A673 (cell line): ENCODE measurements at regions of chr2 and their contacts with region 1.

Region 1: GRCh38 chr2:32553829-32554432 is 73.9 kb upstream of the TTC27 start:
- DNase-seq: peak; percentile 64
- H3K4me3 ChIP-seq: no peak overlapping the region
- H3K27ac ChIP-seq: no peak overlapping the region
- H3K4me1 ChIP-seq: no peaks in the 10 kb centered on the region
- H3K27me3 ChIP-seq: no peaks in the 10 kb centered on the region
- CTCF ChIP-seq: peak; percentile 81

Region 2: GRCh38 chr2:32453242-32454062 is 100.5 kb before region 1 on chr2:
- CTCF ChIA-PET with region 1: no interaction called
- POLR2A ChIA-PET with region 1: no interaction called
- intact Hi-C with region 1: no loop called
- DNase-seq: peak; percentile 80
- H3K4me3 ChIP-seq: no peak overlapping the region
- H3K27ac ChIP-seq: no peak overlapping the region
- H3K4me1 ChIP-seq: peaks cover 25% of the 10 kb centered on the region
- H3K27me3 ChIP-seq: no peaks in the 10 kb centered on the region
- CTCF ChIP-seq: no peak

Region 3: DNA sequence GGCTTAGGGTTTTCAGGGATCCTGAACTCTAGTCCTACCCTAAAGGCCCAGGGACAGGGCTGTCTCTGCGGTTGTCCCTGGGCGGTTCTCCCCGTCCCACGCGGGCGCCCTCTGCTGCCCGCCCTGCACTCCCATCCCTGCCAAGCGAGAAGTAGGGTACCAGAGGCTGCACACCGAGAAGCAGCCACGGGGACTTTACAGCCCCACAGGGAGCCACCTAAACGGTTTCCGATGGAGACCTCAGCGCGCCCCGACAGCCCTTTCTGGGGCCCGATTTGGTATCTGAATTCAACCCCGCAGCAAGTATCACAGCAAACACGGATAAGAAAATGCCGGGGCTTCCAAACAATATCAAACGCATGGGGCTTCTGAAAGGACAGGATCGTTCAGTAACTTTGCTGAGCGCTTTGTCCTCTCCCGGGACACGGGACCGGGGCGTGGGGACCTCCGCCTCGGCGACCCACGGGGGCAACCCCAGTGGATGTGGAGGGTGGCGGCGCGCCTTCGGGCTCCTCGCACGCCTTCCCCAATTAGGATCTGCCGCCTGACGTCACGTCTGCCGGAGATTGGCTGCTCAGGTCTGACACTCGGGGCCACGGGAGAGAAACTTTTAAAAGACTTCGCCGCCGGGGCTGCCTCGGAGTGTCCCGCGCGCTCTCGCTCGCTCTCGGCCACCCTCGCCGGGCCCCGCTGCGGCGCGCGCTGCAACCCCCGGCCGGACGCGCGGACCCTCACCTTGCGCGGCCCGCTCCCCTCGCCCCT is 392.6 kb after region 1 on chr2 and contains the start of gene LTBP1:
- CTCF ChIA-PET with region 1: no interaction called
- POLR2A ChIA-PET with region 1: no interaction called
- intact Hi-C with region 1: loop called (anchors 10 kb)
- DNase-seq: peak; percentile 78
- H3K4me3 ChIP-seq: peak within 1 kb of the TSS; percentile 54
- H3K27ac ChIP-seq: no peak within 1 kb of the TSS
- H3K4me1 ChIP-seq: peaks cover 4% of the 10 kb centered on the region
- H3K27me3 ChIP-seq: peaks cover 43% of the 10 kb centered on the region
- CTCF ChIP-seq: peak; percentile 92
- total RNA-seq, gene LTBP1: 2.2 and 2.3 TPM in 2 replicates

Region 4: DNA sequence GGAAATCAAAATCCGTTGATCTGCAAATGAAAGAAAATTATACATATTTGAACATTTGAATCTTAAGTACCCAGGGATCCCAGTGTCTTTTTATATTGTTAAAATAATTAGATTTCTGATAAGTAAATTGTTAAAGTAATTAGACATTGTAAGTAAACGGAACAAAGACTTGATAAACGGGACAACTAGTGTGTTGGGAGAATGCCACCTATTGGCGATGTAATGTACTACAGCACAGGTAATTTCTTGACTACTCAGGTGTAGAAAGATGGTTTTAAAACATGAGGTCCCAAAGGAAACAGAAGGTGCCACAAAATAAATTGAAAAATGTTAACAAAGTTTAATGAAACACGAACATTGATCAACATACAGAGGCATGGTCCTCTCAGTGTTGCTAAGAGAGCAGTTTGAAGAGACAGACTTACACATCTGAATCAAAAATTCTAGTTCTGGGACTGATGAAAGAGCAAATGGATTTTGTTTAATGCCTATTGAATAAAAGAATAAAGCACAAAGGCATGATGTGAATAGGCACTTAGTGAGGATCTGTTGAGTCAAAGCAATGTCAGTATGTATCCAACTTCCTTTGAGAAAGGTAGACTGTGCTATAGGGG is 819.1 kb after region 1 on chr2:
- CTCF ChIA-PET with region 1: no interaction called
- POLR2A ChIA-PET with region 1: no interaction called
- intact Hi-C with region 1: loop called (anchors 10 kb)
- DNase-seq: peak; percentile 32
- H3K4me3 ChIP-seq: no peak overlapping the region
- H3K27ac ChIP-seq: no peak overlapping the region
- H3K4me1 ChIP-seq: no peaks in the 10 kb centered on the region
- H3K27me3 ChIP-seq: no peaks in the 10 kb centered on the region
- CTCF ChIP-seq: peak; percentile 85

Region 5: DNA sequence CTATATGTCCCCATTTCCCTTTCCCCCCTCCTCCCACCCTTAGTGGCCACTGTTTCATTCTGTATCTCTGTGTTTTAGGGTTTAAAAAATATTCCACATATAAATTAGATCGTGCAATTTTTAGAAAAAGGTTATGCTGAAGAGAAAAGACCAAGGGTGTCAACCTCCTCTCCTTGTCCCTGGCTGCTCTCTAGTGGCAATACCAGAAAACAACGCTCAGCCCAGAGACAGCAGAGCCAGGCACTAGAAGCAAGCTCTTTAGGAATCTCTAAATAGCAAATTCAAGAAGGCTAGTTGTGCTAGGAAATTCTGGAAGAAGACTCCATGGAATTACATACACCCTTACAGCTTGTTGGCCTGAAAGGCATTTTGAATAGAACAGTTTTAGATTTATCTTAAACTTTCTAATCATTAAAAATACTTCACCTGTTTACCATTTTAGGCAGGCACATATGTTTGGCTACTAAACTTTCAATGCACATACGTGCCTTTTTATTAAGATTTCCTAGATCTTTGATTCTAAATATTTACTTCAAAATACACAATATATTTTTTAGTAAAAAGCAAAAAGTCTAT is 887.4 kb after region 1 on chr2:
- CTCF ChIA-PET with region 1: no interaction called
- POLR2A ChIA-PET with region 1: no interaction called
- intact Hi-C with region 1: loop called (anchors 5 kb)
- DNase-seq: peak; percentile 65
- H3K4me3 ChIP-seq: no peak overlapping the region
- H3K27ac ChIP-seq: no peak overlapping the region
- H3K4me1 ChIP-seq: no peaks in the 10 kb centered on the region
- H3K27me3 ChIP-seq: no peaks in the 10 kb centered on the region
- CTCF ChIP-seq: peak; percentile 74

Region 6: GRCh38 chr2:33583194-33583938 is 1029.4 kb after region 1 on chr2:
- CTCF ChIA-PET with region 1: no interaction called
- POLR2A ChIA-PET with region 1: no interaction called
- intact Hi-C with region 1: loop called (anchors 10 kb)
- DNase-seq: peak; percentile 54
- H3K4me3 ChIP-seq: no peak overlapping the region
- H3K27ac ChIP-seq: no peak overlapping the region
- H3K4me1 ChIP-seq: no peaks in the 10 kb centered on the region
- H3K27me3 ChIP-seq: no peaks in the 10 kb centered on the region
- CTCF ChIP-seq: peak; percentile 82